GM10248 (cell line): ENCODE measurements at regions of chr7 and their contacts with region 1.

Region 1: GRCh38 chr7:108452722-108453121 is 3.5 kb downstream of the NRCAM start:
- DNase-seq: peak; percentile 31
- CTCF ChIP-seq: peak; percentile 63

Region 2: DNA sequence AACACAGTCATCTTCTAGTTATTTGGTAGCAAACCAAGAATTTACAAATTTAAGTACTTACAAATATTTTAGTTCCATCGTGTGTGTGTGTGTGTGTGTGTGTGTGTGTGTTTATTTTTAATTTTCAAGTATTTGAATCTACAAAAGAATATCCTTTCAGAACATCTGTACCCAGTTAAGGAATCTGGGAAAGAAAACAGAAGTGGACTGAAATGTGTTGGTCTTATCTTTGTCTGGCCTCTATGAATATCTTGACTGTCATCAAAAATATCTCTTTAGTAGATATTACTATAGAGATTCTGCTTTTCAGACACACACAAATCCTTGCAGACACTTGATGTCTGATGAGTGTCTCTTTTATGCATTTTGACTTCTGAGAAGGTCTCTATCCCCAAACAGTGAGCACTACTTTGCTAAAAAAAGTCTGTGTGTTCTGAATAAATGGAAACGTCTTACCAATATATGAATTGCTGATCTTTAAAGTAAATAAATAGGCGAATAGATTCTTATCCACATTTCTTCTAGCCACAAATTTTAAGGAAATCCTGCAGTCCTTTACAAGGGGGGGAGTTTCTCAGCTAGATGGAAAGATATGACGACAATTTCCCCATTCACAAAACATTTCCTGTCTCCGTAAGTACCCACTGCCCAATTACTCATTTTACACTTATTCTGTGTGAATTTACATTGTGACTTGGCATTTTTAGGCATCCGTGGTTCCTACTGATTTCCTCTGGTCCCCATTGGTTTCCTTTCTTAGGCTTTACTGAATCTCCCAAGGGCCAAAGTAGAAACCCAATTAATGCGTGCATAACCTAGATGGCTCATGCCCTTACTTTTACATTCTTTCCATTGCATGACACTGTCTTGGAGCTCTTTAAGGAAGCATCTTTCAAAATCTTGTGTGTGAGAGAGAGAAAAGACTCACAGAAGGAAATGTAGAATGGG is 32.5 kb before region 1 on chr7:
- CTCF ChIA-PET with region 1: interaction called, 24 read pairs
- POLR2A ChIA-PET with region 1: interaction called, 5 read pairs
- DNase-seq: no peak
- CTCF ChIP-seq: no peak

Region 3: DNA sequence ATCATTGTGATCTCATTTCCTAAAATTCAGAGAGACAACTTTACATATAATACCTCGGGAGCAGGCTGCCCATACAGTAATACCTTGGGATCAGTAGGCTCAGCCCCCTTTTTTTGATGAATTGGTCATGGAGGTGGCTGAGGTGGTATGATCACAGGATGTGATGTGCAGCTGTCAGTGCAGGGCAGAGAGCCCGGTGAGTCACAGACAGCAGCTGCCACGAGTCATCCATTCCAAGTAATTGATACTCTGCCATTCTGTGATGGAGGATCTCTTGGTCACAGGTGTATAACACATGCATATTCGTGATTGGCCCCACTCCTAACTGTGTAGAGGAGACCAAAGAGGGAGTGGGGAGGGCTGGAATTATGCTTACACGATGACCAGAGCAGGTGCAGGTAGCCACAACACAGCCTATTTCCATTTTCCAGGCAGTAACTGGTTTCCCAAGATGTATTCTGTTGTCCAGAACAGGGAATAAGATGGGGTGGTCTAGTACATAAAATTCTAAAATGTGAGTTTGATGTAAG is 10.6 kb before region 1 on chr7:
- CTCF ChIA-PET with region 1: interaction called, 47 read pairs
- POLR2A ChIA-PET with region 1: no interaction called
- DNase-seq: no peak
- CTCF ChIP-seq: no peak

Region 4: GRCh38 chr7:108468246-108468645 is 15.5 kb after region 1 on chr7:
- CTCF ChIA-PET with region 1: interaction called, 24 read pairs
- POLR2A ChIA-PET with region 1: no interaction called
- DNase-seq: no peak
- CTCF ChIP-seq: no peak